ENCODE measurements at regions of chr3 and their contacts with region 1.

Region 1: GRCh38 chr3:165837058-165837525 is at the start of gene BCHE:
- DNase-seq: peak; percentile 78
- H3K4me3 ChIP-seq: peak within 1 kb of the TSS; percentile 5 to 43 (median 17)
- H3K27ac ChIP-seq: no peak within 1 kb of the TSS
- H3K4me1 ChIP-seq: no peaks in the 10 kb centered on the region
- H3K27me3 ChIP-seq: no peaks in the 10 kb centered on the region
- CTCF ChIP-seq: no peak
- POLR2A ChIP-seq: no peak
- total RNA-seq, gene BCHE: 0.27 and 2.4 TPM in 2 replicates

Region 2: DNA sequence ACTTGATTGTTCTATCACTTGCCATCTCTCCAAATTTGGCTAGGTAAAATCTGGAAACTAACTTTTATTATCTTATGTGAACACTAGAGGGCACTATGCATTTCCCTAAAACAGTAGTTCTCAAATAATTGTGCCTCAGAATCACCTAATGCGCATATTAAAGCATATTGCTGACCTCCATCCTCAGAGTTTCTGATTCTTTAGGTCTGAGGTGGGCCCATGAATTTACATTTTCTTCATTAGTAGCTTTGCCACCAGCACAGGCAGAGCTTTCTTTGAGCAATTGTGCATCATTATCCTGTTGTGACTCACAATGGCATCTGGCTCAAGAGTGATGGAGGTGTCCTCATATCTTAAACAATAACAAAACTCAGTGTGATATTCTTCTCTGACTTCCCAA is 17.6 kb after region 1 on chr3:
- CTCF ChIA-PET with region 1: interaction called, 11 read pairs
- POLR2A ChIA-PET with region 1: no interaction called
- dilution Hi-C with region 1: no loop called
- intact Hi-C with region 1: no loop called
- DNase-seq: peak; percentile 36
- H3K4me3 ChIP-seq: no peak overlapping the region
- H3K27ac ChIP-seq: no peak overlapping the region
- H3K4me1 ChIP-seq: peaks cover 3% of the 10 kb centered on the region
- H3K27me3 ChIP-seq: no peaks in the 10 kb centered on the region
- CTCF ChIP-seq: peak; percentile 22 to 36
- POLR2A ChIP-seq: no peak